Activated CD4-positive, alpha-beta memory T cell treated with anti-CD3 and anti-CD28 coated beads for 36 hours (primary cell): ENCODE measurements at regions of chr13 and their contacts with region 1.

Region 1: GRCh38 chr13:99366075-99366987 is 59.1 kb upstream of the GPR183 start:
- DNase-seq: no peak
- H3K4me3 Mint-ChIP-seq: peak overlapping the region; percentile 13
- H3K27ac Mint-ChIP-seq: peak overlapping the region; percentile 15
- H3K4me1 Mint-ChIP-seq: peaks cover 87% of the 10 kb centered on the region
- H3K27me3 Mint-ChIP-seq: no peaks in the 10 kb centered on the region

Region 2: GRCh38 chr13:99380921-99381645 is 14.8 kb after region 1 on chr13:
- CTCF ChIA-PET with region 1: interaction called, 14 read pairs
- POLR2A ChIA-PET with region 1: interaction called, 11 read pairs
- intact Hi-C with region 1: loop called (anchors 1 kb)
- DNase-seq: peak; percentile 87
- H3K4me3 Mint-ChIP-seq: peak overlapping the region; percentile 36
- H3K27ac Mint-ChIP-seq: peak overlapping the region; percentile 89
- H3K4me1 Mint-ChIP-seq: peaks cover 84% of the 10 kb centered on the region
- H3K27me3 Mint-ChIP-seq: no peaks in the 10 kb centered on the region

Region 3: DNA sequence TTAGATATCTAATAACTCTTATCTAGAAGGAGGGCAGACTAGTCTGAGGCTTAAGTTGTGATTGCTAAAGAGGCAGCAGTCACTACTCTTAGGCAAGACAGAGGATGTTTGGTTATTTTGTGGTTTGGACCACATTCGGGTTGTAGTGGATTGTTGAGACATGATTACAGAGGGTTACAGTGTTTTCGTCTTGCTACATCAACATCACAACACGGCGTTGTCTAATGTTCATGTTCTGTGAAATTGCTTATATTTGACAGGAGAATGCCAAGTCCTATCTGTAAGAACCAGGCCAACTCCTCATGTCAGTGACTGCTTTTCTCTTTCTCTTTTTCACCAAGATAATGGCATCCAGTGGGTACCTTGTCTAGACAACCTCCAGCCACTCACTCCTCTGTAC is 118.1 kb after region 1 on chr13:
- CTCF ChIA-PET with region 1: no interaction called
- POLR2A ChIA-PET with region 1: no interaction called
- intact Hi-C with region 1: no loop called
- DNase-seq: no peak
- H3K4me3 Mint-ChIP-seq: no peak overlapping the region
- H3K27ac Mint-ChIP-seq: no peak overlapping the region
- H3K4me1 Mint-ChIP-seq: peaks cover 11% of the 10 kb centered on the region
- H3K27me3 Mint-ChIP-seq: no peaks in the 10 kb centered on the region

Region 4: GRCh38 chr13:99505814-99506269 is 139.5 kb after region 1 on chr13:
- CTCF ChIA-PET with region 1: no interaction called
- POLR2A ChIA-PET with region 1: no interaction called
- intact Hi-C with region 1: no loop called
- DNase-seq: no peak
- H3K4me3 Mint-ChIP-seq: peak overlapping the region; percentile 25
- H3K27ac Mint-ChIP-seq: no peak overlapping the region
- H3K4me1 Mint-ChIP-seq: peaks cover 67% of the 10 kb centered on the region
- H3K27me3 Mint-ChIP-seq: no peaks in the 10 kb centered on the region

Region 5: DNA sequence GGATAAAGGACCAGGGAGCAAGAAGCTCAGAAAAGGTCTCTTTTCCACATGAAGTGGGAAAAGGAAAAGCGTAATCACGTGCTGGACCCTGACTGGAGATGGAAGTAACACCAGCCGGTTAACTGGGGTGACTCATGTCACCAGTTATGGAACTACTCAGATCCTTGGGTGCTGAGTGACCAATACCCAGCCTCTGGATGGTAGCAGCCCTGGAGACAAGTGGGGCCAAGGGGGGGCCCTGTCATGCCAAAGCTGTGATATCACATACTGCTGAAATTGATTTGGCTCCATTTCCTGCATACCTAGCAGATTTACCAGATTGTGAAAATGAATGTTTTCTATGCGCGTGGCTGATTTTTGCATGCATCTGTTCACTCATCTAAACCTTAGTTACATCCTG is 446.3 kb after region 1 on chr13:
- CTCF ChIA-PET with region 1: no interaction called
- POLR2A ChIA-PET with region 1: no interaction called
- intact Hi-C with region 1: no loop called
- DNase-seq: no peak
- H3K4me3 Mint-ChIP-seq: no peak overlapping the region
- H3K27ac Mint-ChIP-seq: no peak overlapping the region
- H3K4me1 Mint-ChIP-seq: peaks cover 5% of the 10 kb centered on the region
- H3K27me3 Mint-ChIP-seq: no peaks in the 10 kb centered on the region